Activated T-helper 2 cell treated with anti-CD3 and anti-CD28 coated beads, Interferon-gamma antibody, Interleukin-2, Interleukin-4, amounts not matched to agents 10 μg/mL and 5 μg/mL and 100 μg/mL, durations not matched to agents 14 hours and 24 hours and 36 hours (primary cell): ENCODE measurements at regions of chr5 and their contacts with region 1.

Region 1: DNA sequence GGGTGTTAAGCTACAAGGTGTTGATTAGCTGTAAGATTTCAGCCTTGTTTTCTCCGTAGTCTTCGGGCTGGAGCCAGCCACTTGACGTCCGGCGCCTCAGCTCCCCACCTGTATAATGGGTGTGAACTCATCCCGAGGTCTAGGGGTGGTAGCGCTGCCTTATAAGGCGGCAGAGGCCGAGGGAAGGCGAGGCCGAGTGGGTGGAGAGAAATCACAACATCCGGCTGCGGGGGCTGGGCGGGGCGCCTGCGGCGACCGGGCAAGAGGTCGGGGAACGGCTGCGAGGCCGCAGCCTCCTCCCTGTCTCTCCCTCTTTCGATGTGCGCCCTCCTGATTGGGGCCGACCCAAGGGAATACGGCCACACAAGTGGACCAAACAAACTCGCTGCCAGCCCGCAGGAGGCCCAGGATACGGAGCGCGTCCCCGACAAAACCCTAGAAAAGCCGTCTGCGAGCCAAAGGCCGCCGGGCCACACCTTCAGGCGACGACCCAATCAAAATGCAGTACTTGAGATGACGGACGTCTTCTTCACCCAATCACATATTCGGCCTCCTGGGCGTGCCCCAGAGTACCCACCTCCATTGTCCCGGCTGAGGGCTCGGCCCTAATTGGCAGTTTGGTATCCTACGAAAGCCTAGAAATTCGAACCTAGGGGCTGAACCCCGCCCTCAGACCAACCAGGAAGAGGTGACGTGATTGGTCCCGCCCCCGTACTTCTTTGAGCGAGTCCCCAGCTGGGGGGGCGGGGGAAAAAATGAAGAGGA is 493 bp upstream of the GRK6 start:
- DNase-seq: peak; percentile 99
- H3K4me3 Mint-ChIP-seq: peak overlapping the region; percentile 82
- H3K27ac Mint-ChIP-seq: peak overlapping the region; percentile 82
- H3K4me1 Mint-ChIP-seq: peaks cover 46% of the 10 kb centered on the region
- H3K27me3 Mint-ChIP-seq: no peaks in the 10 kb centered on the region

Region 2: DNA sequence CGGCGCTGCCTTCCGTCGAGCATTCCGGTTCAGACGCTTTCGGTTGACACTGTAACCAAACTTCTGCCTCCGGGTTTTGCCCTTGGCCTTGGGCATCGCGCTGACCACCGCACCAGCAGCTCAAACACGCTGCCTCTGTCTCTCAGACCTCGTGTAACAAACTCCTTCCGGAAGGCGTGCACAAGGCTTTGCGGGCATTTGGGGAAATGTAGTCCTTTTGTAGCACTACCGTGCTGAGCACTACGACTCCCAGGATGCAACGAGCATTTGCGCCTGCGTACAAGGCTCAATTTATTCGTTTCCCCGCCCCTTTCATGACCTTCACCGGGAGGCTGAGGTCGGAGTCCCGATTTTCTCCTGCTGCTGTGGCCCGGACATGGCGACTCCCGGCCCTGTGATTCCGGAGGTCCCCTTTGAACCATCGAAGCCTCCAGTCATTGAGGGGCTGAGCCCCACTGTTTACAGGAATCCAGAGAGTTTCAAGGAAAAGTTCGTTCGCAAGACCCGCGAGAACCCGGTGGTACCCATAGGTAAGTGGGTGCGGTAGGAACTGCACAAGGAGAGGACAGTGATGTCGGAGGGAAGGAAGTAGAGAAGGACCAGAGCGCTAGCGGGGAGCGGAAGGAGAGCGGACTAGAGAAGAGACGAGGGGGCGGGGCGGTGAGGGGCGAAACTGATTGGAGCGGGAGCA is 1037.4 kb before region 1 on chr5 and contains the starts of genes HIGD2A and NOP16:
- intact Hi-C with region 1: no loop called
- DNase-seq: peak; percentile 98
- H3K4me3 Mint-ChIP-seq: peak within 1 kb of the TSS; percentile 97
- H3K27ac Mint-ChIP-seq: peak within 1 kb of the TSS; percentile 99
- H3K4me1 Mint-ChIP-seq: peaks cover 21% of the 10 kb centered on the region
- H3K27me3 Mint-ChIP-seq: no peaks in the 10 kb centered on the region
- total RNA-seq, gene HIGD2A: 102 and 105 TPM in 2 replicates
- total RNA-seq, gene NOP16: 79.6 and 84.0 TPM in 2 replicates

Region 3: DNA sequence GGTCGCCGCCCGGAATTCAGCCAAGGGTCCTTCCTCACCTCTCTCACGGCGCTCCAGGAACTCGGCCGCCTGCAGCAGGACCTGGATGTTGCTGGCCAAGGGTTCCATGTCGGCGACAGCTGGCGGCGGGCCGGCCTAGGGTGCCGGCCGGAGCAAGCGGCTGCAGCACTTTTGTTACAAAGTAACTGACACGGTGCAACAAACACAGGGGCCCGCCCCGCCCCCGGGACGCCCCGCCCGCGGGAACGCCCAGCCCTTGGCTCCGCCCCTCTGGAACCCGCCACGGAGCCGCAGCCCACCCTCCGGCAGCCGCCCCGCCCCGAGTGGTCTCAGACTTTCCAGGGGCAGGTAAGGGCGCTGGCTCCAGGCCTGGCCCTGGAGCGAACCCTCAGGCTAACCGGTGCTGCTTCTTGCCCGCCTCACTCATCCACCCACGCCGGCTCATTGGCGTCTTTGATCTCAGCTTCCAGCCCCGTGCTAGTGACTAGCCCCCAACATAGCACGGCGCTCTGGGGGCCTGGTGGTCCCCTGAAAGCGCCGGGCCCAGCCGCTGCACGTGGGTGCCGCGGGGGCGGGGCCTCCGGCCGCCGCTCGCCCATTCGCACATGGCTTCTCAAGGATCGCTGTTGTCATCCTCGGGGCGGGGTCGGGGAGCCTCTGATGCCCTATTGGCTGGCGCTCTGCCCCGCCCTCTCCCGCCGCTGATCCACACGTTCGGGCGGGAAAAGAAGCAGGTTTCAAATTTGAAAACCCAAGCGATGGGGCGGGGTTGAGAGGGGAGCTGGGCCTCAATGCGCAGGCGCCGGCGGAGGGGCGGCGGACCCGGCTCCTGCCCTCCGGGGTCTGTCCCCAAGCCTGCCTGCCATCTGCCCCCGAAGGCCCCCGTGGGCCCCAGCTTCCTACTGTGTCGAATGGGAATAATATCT is 114.0 kb before region 1 on chr5 and contains the start of gene MXD3:
- intact Hi-C with region 1: loop called (anchors 1 kb)
- DNase-seq: peak; percentile 97
- H3K4me3 Mint-ChIP-seq: peak within 1 kb of the TSS; percentile 92
- H3K27ac Mint-ChIP-seq: peak within 1 kb of the TSS; percentile 89
- H3K4me1 Mint-ChIP-seq: peaks cover 39% of the 10 kb centered on the region
- H3K27me3 Mint-ChIP-seq: no peaks in the 10 kb centered on the region
- total RNA-seq, gene MXD3: 12.8 and 13.9 TPM in 2 replicates

Region 4: GRCh38 chr5:177390363-177391300 is 35.4 kb before region 1 on chr5:
- intact Hi-C with region 1: loop called (anchors 5 kb)
- DNase-seq: peak; percentile 82
- H3K4me3 Mint-ChIP-seq: no peak overlapping the region
- H3K27ac Mint-ChIP-seq: peak overlapping the region; percentile 63
- H3K4me1 Mint-ChIP-seq: peaks cover 26% of the 10 kb centered on the region
- H3K27me3 Mint-ChIP-seq: peaks cover 8% of the 10 kb centered on the region

Region 5: DNA sequence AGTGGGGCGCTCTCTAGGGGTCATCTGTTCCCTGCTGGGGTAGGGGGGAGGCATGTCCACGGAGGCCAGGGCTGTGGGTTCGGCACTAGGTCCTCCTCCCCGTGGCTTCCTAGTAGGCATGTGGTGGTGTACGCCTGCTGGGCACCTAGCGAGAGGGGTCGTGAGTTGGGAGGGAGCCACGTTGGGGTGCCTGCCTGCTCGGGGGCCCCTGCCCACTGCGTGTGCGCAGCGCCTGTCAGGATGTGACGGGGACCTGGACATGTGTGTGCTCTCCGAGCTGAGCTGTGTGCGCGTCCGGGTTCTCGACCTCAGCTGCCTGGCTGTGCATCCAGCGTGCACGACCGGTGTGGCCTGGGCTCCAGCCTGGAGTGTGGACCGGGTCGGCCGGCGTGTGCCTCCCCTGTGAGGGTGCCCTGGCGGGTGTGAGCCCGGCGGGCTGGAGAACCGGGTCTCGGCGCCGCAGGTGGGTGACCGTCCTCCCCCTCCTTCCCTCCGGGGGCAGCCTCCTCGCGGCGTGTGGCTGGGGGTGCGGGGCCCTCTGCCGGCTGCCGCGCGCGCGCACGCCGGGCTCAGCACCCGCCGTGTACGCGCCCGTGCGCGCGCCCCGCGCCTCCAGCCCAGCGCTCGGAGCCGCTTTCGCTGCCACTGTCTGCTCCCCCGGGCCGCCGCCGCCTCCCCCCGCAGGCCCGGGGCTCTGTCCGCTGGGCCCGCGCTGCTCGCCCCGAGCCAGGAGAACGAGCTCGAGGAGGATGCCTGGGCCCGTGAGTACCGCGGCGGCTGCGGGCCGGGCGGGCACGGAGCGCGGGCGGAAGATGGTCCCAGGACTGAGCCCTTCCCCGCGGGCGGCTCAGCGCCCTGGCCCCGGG is 20.4 kb after region 1 on chr5 and contains the start of gene PRR7:
- intact Hi-C with region 1: loop called (anchors 2 kb)
- DNase-seq: peak; percentile 69
- H3K4me3 Mint-ChIP-seq: peak within 1 kb of the TSS; percentile 73
- H3K27ac Mint-ChIP-seq: peak within 1 kb of the TSS; percentile 88
- H3K4me1 Mint-ChIP-seq: peaks cover 31% of the 10 kb centered on the region
- H3K27me3 Mint-ChIP-seq: peaks cover 2% of the 10 kb centered on the region
- total RNA-seq, gene PRR7: 12.1 and 13.0 TPM in 2 replicates

Region 6: GRCh38 chr5:177497292-177498033 is 71.5 kb after region 1 on chr5 and contains the start of gene PDLIM7:
- intact Hi-C with region 1: loop called (anchors 2 kb)
- DNase-seq: peak; percentile 93
- H3K4me3 Mint-ChIP-seq: peak within 1 kb of the TSS; percentile 86
- H3K27ac Mint-ChIP-seq: peak within 1 kb of the TSS; percentile 62
- H3K4me1 Mint-ChIP-seq: peaks cover 23% of the 10 kb centered on the region
- H3K27me3 Mint-ChIP-seq: peaks cover 18% of the 10 kb centered on the region
- total RNA-seq, gene PDLIM7: 85.4 and 86.9 TPM in 2 replicates